ENCODE measurements at regions of chr10 and their contacts with region 1.

Region 1: GRCh38 chr10:28663576-28664313 is 13.6 kb upstream of the BAMBI start:
- DNase-seq: peak; percentile 80
- H3K4me3 ChIP-seq: no peak overlapping the region
- H3K27ac ChIP-seq: no peak overlapping the region
- H3K4me1 ChIP-seq: no peaks in the 10 kb centered on the region
- H3K27me3 ChIP-seq: peaks cover 8 to 12% of the 10 kb centered on the region in 2 experiments
- CTCF ChIP-seq: peak; percentile 95 to 96
- POLR2A ChIP-seq: no peak

Region 2: DNA sequence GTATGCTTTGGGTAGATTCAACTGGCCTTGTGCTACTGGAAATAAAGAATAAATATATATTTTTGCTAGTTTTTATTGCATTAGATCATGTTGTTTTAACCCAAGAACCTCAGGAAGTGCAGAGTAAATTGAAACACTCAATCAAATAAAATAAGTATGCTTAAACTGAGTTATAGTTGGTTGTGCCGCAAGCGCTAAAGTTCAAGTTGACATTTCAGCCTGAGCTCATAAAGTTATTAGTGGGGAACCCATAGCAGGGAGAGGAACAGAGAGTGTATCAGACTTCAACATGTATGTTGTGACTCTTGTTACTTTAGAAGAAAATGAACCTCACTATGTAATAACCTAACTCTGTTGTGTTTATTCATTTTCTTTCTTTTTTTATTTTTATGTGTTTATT is 11.6 kb before region 1 on chr10:
- CTCF ChIA-PET with region 1: interaction called, 12 read pairs
- POLR2A ChIA-PET with region 1: no interaction called
- dilution Hi-C with region 1: no loop called
- intact Hi-C with region 1: no loop called
- DNase-seq: no peak
- H3K4me3 ChIP-seq: no peak overlapping the region
- H3K27ac ChIP-seq: no peak overlapping the region
- H3K4me1 ChIP-seq: no peaks in the 10 kb centered on the region
- H3K27me3 ChIP-seq: no peaks in the 10 kb centered on the region
- CTCF ChIP-seq: no peak
- POLR2A ChIP-seq: no peak

Region 3: DNA sequence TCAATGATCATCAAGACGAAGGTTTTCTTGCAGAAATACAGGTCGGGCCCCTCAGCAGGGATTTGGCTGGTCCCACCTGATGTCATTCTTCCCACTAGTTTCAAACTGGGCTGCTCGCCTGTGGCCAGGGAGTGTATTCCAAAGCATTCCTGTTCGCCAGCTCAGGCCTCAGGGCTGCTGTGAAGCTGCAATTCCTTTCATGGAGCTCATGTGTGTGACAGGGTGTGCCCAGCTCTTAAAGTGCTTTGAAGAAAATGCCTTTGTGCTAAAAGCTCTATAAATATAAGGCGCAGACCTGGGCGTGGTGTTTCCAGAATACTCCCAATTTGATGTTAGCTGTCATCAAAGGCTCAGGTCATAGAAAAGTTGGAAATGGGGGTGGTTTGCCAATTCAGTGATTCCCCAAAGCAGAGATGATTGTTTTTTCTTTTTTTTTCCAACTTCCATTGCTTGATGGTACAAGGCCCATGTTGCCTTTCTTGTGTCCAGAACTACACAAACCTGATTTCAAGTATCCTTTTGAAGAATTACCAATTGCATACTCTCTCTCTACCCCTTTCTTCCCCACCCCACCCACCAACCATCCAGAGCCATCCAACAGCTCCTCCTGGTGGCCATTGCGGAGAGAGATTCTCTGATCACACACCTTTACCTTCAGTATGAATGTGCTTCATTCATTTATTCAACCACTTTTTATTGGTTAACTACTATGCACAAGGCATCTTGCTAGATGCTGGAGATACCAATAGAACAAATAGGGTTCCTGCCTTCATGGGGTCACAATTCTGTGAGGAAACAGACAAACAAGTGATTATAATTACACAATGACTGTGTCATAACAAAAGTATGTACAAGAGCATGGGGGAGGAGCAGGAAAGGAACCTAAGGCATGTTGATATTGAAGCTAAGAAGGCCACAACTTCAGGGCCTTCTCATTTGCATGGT is 327.9 kb after region 1 on chr10:
- CTCF ChIA-PET with region 1: interaction called, 295 read pairs
- POLR2A ChIA-PET with region 1: no interaction called
- dilution Hi-C with region 1: no loop called
- intact Hi-C with region 1: loop called (anchors 1 kb)
- DNase-seq: peak; percentile 51
- H3K4me3 ChIP-seq: no peak overlapping the region
- H3K27ac ChIP-seq: no peak overlapping the region
- H3K4me1 ChIP-seq: no peaks in the 10 kb centered on the region
- H3K27me3 ChIP-seq: peaks cover 0 to 4% of the 10 kb centered on the region in 2 experiments
- CTCF ChIP-seq: peak; percentile 70 to 80
- POLR2A ChIP-seq: no peak

Region 4: GRCh38 chr10:29127037-29127700 is 463.4 kb after region 1 on chr10:
- CTCF ChIA-PET with region 1: interaction called, 53 read pairs
- POLR2A ChIA-PET with region 1: interaction called, 5 read pairs
- dilution Hi-C with region 1: no loop called
- intact Hi-C with region 1: loop called (anchors 2 kb)
- DNase-seq: no peak
- H3K4me3 ChIP-seq: no peak overlapping the region
- H3K27ac ChIP-seq: no peak overlapping the region
- H3K4me1 ChIP-seq: peaks cover 7% of the 10 kb centered on the region
- H3K27me3 ChIP-seq: peaks cover 10 to 11% of the 10 kb centered on the region in 2 experiments
- CTCF ChIP-seq: no peak
- POLR2A ChIP-seq: no peak

Region 5: DNA sequence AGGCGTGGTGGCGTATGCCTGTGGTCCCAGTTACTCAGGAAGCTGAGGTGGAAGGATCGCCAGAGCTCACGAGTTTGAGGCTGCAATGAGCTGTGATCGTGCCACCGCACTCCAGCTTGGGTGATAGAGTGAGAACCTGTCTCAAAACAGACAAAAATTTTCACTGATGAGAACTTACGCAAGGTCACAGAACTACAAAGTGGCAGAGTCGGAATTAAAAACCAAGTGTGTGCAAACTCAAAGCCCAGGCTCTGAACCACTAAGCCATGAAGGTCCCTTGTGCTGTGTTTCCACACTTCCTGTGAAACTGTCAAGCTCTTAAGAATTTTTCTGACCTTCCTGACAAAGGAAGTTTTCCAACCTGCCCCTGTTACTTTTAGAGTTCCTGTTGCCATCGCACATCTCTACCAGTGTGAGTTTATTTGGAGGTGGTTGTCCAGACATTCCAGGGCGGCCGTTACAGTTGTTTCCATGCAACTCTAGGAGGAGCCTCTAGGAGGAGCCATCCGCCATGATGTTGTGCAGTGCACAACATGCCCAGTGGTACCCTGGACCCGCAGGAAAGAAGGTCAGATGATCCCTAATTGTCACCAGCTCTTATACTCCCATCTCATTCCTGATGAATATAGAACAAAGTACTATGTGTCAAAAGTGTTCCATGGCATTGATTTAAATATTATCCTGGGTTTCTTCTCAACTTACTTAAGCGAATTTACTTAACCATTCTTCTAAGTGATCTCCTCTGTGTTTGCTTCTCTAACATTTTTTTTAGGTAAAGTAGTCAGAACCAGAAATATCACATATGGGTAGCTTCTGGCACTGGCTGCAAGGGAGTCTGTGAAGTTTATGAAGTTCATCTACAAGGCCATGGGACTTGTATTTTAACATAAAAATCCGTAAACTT is 576.1 kb after region 1 on chr10:
- CTCF ChIA-PET with region 1: interaction called, 35 read pairs
- POLR2A ChIA-PET with region 1: no interaction called
- dilution Hi-C with region 1: no loop called
- intact Hi-C with region 1: loop called (anchors 2 kb)
- DNase-seq: peak; percentile 4
- H3K4me3 ChIP-seq: no peak overlapping the region
- H3K27ac ChIP-seq: no peak overlapping the region
- H3K4me1 ChIP-seq: no peaks in the 10 kb centered on the region
- H3K27me3 ChIP-seq: peaks cover 0 to 2% of the 10 kb centered on the region in 2 experiments
- CTCF ChIP-seq: peak; percentile 39 to 52
- POLR2A ChIP-seq: no peak

Measured in endothelial cell of umbilical vein (primary cell).